Heart right ventricle (tissue), 16 donors: ENCODE measurements at regions of chr11 and their contacts with region 1.

Region 1: GRCh38 chr11:120344302-120345004 is 8.2 kb downstream of the ARHGEF12 start:
- DNase-seq: no peak
- ATAC-seq: peak in 1 of 8 donors; percentile 26
- H3K4me3 ChIP-seq: no peak overlapping the region
- H3K27ac ChIP-seq: peak overlapping the region in 3 of 10 donors; percentile 6 to 38 (median 16)
- H3K4me1 ChIP-seq: peaks cover 13 to 98% (median 80%) of the 10 kb centered on the region in 9 donors
- H3K27me3 ChIP-seq: peaks cover 0 to 90% (median 0%) of the 10 kb centered on the region in 7 donors
- CTCF ChIP-seq: no peak

Region 2: DNA sequence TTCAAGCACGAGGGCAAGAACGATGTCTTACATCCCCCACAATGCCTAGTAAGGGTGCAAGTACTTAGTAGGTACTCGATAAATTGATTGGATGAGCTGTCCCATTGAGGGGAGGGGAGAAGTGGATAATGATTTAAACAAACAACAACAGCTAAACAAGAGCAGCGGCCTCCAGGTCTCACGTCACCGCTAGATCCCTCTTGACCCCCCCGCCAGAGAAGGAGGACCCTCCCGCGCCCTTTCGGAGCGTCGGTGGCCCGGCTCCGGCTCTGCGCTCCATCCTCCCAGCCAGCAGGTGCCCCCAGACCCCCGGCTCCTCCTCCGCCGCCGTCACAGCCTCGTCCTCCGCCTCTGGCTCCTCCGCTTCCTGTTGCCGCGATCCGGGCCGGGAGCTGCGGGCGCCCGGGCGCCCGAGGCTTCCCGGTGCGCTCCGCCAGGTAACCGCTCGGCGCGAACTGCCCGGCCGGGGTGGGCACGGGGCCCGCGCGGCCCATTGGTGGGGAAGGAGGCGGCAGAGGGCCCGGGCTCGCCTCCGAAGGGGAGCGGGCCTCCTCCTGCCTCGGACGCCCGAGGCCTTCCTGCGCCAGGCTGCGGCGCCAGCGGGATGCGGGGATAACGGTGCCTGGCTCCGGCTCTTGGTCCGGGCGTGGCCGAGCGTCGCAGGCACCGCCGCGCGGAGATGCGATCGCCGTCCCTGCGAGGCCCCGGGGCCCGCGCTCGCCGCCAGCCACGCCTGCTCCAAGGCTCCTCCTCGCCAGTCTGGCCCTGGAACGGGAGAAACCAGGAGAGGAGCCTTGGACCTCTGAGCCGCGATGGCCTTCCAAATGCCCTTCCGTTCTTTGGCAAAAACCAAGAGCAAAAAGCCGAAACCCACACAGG is 19.3 kb before region 1 on chr11 and contains the start of gene TLCD5:
- intact Hi-C with region 1: no loop called
- DNase-seq: peak; percentile 72 to 76
- ATAC-seq: peak; percentile 77 to 86 (median 82)
- H3K4me3 ChIP-seq: peak within 1 kb of the TSS; percentile 40 to 91 (median 72)
- H3K27ac ChIP-seq: peak within 1 kb of the TSS; percentile 84 to 99 (median 94)
- H3K4me1 ChIP-seq: peaks cover 9 to 36% (median 24%) of the 10 kb centered on the region in 9 donors
- H3K27me3 ChIP-seq: peaks cover 0 to 74% (median 0%) of the 10 kb centered on the region in 7 donors
- CTCF ChIP-seq: peak in 4 of 9 donors; percentile 11 to 36 (median 28)
- total RNA-seq, gene TLCD5: 7.4 to 14.5 (median 10.7) TPM

Region 3: DNA sequence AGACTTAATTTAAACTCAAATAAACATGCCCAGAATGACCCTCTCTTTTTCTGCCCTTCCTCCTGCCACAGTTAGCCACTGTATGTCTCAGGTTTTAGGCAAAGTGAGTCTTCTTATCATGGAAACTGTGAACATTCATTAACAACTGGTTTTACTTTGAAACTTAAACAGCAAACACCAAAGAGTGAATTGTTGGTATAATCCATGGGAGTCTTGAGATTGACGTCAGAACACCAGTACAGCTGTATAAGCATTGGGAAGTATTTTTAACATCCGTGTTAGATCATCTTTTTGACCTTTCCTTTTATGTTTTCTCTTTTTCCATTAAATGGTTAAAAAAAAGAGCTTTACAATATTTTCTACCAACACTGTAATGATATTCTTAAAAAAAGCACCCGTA is 30.6 kb after region 1 on chr11:
- intact Hi-C with region 1: loop called in 2 of 10 experiments (anchors 5 kb)
- DNase-seq: no peak
- ATAC-seq: peak in 5 of 8 donors; percentile 29 to 78 (median 44)
- H3K4me3 ChIP-seq: no peak overlapping the region
- H3K27ac ChIP-seq: peak overlapping the region in 6 of 10 donors; percentile 2 to 57 (median 10)
- H3K4me1 ChIP-seq: peaks cover 3 to 83% (median 56%) of the 10 kb centered on the region in 9 donors
- H3K27me3 ChIP-seq: peaks cover 0 to 8% (median 0%) of the 10 kb centered on the region in 7 donors
- CTCF ChIP-seq: no peak

Region 4: GRCh38 chr11:120385110-120385509 is 40.7 kb after region 1 on chr11:
- intact Hi-C with region 1: loop called in 3 of 10 experiments (anchors 1 to 5 kb)
- DNase-seq: no peak
- ATAC-seq: no peak
- H3K4me3 ChIP-seq: no peak overlapping the region
- H3K27ac ChIP-seq: peak overlapping the region in 2 of 10 donors; percentile 6 to 32
- H3K4me1 ChIP-seq: peaks cover 10 to 81% (median 58%) of the 10 kb centered on the region in 9 donors
- H3K27me3 ChIP-seq: no peaks in the 10 kb centered on the region
- CTCF ChIP-seq: no peak

Region 5: GRCh38 chr11:120424185-120424969 is 79.9 kb after region 1 on chr11:
- intact Hi-C with region 1: loop called in 1 of 10 experiments (anchors 10 kb)
- DNase-seq: no peak
- ATAC-seq: no peak
- H3K4me3 ChIP-seq: no peak overlapping the region
- H3K27ac ChIP-seq: no peak overlapping the region
- H3K4me1 ChIP-seq: peaks cover 0 to 13% (median 0%) of the 10 kb centered on the region in 9 donors
- H3K27me3 ChIP-seq: no peaks in the 10 kb centered on the region
- CTCF ChIP-seq: no peak

Region 6: GRCh38 chr11:120883404-120884080 is 539.1 kb after region 1 on chr11:
- intact Hi-C with region 1: no loop called
- DNase-seq: peak; percentile 43 to 58
- ATAC-seq: peak; percentile 46 to 97 (median 92)
- H3K4me3 ChIP-seq: no peak overlapping the region
- H3K27ac ChIP-seq: peak overlapping the region in 5 of 10 donors; percentile 5 to 62 (median 34)
- H3K4me1 ChIP-seq: peaks cover 0 to 36% (median 13%) of the 10 kb centered on the region in 9 donors
- H3K27me3 ChIP-seq: peaks cover 0 to 7% (median 0%) of the 10 kb centered on the region in 7 donors
- CTCF ChIP-seq: no peak